Mammary epithelial cell (primary cell): ENCODE measurements at regions of chr2 and their contacts with region 1.

Region 1: DNA sequence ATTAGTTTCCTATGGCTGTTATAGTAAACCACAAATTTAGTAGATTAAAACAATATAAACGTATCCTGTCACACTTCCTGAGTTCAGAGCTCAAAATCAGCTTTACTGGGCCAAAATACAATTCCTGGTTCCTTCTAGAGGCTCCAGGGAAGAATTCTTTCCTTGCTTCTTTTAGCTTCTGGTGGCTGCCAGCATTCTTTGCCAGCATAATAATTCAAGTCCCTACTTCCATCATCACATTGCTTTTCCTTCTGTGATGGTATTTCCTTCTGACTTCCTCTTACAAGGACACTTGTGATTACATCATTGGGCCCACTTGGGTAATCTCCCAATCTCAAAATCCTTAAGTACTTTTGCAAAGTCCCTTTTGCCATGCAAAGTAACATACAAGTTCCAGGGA is 40.6 kb downstream of the MOB4 start:
- DNase-seq: no peak
- H3K4me3 ChIP-seq: no peak overlapping the region
- H3K27ac ChIP-seq: no peak overlapping the region
- H3K4me1 ChIP-seq: no peaks in the 10 kb centered on the region
- H3K27me3 ChIP-seq: no peaks in the 10 kb centered on the region
- CTCF ChIP-seq: no peak

Region 2: DNA sequence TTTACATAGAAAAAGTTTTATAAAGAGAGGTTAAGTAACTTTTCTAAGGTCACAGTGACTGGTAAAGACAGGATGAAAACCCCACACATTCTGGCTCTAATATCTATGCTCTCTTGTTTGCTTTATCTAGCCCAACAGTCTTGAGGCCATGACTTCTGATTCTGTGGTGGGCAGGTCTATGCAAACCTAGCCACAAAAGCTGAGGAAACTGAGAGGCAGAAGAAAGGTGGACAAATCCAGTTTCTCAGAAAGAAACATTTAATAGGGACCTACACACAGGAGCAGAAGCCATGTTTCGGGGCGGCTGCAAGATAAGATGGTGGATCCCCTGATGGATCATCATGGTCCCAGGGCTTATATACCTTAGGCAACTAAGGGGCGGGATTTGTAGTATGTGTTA is 78.7 kb before region 1 on chr2:
- CTCF ChIA-PET with region 1: no interaction called
- dilution Hi-C with region 1: loop called (anchors 5 kb)
- in situ Hi-C with region 1: no loop called
- intact Hi-C with region 1: no loop called
- DNase-seq: no peak
- H3K4me3 ChIP-seq: no peak overlapping the region
- H3K27ac ChIP-seq: no peak overlapping the region
- H3K4me1 ChIP-seq: no peaks in the 10 kb centered on the region
- H3K27me3 ChIP-seq: no peaks in the 10 kb centered on the region
- CTCF ChIP-seq: no peak